Activated CD4-positive, alpha-beta memory T cell treated with anti-CD3 and anti-CD28 coated beads, Interleukin-2, amount 10 ng/mL, durations not matched to agents 7 days and 5 days (primary cell): ENCODE measurements at regions of chr3 and their contacts with region 1.

Region 1: DNA sequence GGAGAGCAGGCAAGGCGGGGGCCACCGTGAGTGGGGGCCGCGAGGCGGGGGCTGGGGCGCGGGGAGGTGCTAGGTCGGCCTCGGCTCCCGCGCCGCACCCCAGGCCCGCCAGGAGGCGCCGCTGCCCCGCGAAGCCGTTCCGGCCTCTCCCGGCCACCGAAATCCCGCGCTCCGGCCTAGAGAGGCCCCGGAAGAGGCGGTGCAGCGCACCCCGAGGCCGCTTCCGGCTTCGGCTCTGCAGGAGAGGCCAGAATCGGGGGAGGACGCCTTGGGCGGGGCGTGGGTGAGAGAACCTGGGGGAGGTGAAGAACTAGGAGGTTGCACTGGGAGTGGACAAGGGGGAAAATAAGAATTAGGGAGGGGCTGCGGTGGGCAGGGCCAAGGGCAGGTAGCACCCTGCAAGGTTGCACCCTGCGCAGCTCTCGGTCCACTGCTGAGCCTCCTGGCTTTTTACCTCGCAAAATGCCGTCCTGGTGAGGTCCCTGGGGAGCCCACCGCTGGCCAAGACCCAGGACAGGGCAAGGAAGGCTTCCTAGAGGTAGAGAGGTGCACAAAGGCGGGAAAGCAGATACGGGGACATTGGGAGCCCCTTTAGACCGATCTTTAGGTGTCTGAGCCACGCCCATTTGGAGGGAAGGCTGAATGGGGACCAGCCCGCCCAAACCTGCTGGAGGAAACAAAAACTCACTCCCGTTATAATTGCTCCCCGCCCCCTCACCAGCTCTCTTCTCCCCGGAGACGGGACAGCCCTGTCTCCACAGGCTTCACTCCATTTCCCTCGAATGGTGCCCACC is 8.4 kb upstream of the GNAI2 start:
- DNase-seq: peak; percentile 94
- H3K4me3 Mint-ChIP-seq: peak overlapping the region; percentile 85
- H3K27ac Mint-ChIP-seq: peak overlapping the region; percentile 89
- H3K4me1 Mint-ChIP-seq: peaks cover 32% of the 10 kb centered on the region
- H3K27me3 Mint-ChIP-seq: peaks cover 15% of the 10 kb centered on the region

Region 2: DNA sequence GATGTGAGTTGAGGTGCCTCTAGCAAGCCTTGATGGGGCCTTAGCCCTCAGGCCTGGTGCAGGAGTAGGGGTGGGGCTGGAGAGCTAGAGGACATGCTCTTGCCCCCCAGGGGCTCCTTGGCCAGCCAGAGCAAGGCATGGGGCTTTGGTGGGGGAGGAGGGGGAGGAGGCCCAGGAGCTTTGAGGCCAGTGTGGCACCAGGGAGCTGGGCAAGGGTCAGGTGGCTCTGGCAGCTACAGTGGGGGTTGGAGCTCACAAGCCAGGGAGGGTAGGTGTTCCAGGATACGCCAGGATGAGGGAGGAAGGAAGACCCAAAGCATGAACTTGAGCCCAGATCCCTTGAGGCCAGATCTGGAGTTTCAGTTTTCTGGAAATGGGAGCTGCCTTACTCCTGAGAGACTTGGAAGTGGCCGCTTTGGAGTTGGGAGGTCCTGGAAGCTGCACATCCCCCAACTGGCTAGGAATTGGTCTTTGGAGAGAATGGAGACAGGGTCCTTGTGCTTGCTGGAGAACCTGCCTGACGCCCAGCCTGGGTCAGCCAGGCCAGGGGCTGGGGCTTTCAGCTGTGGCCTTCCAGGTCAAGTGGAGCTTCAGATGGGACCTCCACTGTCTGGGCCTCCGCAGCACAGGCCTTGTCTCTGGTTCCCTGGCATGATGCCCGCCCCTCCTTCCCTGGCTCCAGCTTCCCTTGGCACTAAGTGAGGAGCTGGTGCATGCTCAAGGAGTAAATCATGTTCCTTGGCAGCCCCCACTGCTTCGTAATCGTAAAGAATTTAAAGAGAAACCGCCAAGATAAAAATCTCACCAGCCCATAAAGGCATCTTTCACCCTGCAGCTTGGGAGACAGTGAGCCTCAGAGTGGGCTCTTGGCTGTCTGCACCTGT is 63.8 kb before region 1 on chr3:
- CTCF ChIA-PET with region 1: no interaction called
- POLR2A ChIA-PET with region 1: no interaction called
- DNase-seq: no peak
- H3K4me3 Mint-ChIP-seq: no peak overlapping the region
- H3K27ac Mint-ChIP-seq: no peak overlapping the region
- H3K4me1 Mint-ChIP-seq: no peaks in the 10 kb centered on the region
- H3K27me3 Mint-ChIP-seq: peaks cover 1% of the 10 kb centered on the region

Region 3: DNA sequence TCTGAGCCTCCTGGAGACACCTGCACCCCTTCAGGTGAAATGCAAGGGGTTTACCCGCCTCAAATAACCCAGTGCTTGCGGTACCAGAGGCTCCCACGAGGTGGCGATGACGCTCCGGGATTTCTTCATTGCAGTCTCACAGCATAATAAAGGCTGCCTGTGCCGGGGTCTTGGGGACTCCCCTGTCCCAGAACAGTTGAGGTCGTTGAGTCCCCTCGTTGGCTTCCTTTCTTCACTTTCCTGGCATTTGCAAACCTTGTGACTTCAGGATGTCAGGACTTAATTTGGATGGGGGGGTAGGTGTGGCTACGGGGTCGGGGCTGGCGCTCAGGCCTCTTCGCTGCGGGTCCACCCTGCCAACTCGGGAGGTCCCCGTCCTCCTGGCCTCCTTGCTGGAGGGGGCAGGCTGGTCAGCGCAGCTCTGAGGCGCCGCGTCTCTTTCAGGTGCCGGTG is 34.9 kb before region 1 on chr3:
- CTCF ChIA-PET with region 1: interaction called, 101 read pairs
- POLR2A ChIA-PET with region 1: interaction called, 42 read pairs
- DNase-seq: peak; percentile 85
- H3K4me3 Mint-ChIP-seq: no peak overlapping the region
- H3K27ac Mint-ChIP-seq: no peak overlapping the region
- H3K4me1 Mint-ChIP-seq: peaks cover 12% of the 10 kb centered on the region
- H3K27me3 Mint-ChIP-seq: peaks cover 25% of the 10 kb centered on the region

Region 4: GRCh38 chr3:50201573-50202315 is 25.8 kb before region 1 on chr3:
- CTCF ChIA-PET with region 1: interaction called, 101 read pairs
- POLR2A ChIA-PET with region 1: no interaction called
- DNase-seq: no peak
- H3K4me3 Mint-ChIP-seq: no peak overlapping the region
- H3K27ac Mint-ChIP-seq: no peak overlapping the region
- H3K4me1 Mint-ChIP-seq: no peaks in the 10 kb centered on the region
- H3K27me3 Mint-ChIP-seq: peaks cover 41% of the 10 kb centered on the region

Region 5: DNA sequence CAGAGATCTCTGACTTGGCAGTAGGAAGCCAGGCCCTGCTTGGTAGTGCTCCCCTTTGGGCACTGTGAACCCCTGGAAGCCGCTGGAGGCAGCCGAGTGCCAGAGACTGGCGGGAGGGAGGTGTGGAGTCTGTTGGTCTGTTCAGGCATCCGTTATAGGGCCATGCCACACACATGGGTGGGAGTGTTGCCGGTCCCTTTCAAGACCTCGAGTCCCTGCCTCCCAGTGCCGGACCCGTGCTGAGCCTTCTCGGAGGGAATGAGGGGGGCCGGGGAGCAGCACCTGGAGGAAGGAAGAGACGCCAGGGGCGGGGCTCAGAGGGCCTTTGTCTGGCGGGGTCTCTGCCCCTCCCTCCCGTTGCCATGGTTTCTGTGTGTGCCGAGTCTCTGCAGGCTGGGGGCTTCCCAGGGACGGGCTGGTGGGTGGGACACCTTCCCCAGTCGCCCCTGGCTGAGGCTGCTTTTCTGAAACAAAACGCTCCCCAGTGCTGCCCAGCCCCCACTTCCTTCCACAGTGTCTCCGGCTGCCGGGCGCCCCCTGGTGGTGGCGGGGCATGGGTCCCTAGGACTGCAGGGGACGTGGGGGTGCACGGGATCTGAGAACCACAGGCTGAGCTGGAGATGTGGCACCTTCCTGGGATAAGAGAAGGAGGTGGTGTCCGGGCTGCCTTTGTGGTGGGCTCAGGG is 18.4 kb after region 1 on chr3:
- CTCF ChIA-PET with region 1: interaction called, 212 read pairs
- POLR2A ChIA-PET with region 1: interaction called, 117 read pairs
- DNase-seq: peak; percentile 94
- H3K4me3 Mint-ChIP-seq: peak overlapping the region; percentile 78
- H3K27ac Mint-ChIP-seq: peak overlapping the region; percentile 94
- H3K4me1 Mint-ChIP-seq: peaks cover 91% of the 10 kb centered on the region
- H3K27me3 Mint-ChIP-seq: no peaks in the 10 kb centered on the region

Region 6: DNA sequence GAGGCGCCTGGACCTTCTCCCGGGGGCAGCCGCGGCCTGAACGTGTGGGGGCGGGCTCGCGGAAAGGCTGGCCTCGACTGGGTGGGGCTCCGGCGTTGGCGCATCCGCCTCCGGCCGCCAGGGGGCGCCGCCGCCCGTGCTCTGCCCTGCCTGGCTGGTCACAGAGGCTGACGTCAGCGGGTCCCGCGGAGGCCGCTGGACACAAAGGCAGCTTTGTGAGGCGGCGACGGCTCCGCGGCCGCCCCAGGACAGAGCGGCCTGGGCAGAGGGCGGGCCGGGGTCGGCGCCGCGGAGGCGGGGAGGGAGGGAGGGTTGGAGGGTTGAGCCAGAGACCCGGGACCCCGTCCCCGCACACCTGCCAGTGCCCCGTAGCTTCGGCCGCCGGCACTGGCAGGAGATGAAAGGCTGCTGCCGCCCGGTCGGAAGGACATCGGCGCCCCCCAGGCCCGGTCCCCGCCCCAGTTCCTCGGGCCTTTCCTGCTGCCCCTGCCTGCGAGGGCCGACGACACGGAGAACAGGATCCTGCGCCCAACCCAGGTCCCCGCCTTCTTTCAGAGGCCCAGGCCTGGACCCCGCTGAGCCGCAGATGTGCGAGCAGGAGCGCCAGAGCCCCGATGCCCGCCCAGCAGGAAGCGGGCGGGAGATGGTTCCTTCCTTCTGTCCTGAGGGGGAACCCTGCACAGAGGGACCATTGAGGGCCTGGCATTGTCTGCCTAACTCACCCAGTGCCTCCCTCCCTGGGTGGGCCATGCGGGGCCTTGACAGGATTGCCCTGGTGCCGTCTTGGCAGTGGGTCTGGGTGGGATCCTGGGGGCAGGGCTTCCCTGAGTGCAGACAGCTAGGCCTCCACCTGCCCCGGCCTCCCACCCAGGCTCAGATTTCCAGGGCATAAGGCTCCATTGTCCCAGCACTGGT is 32.7 kb after region 1 on chr3:
- CTCF ChIA-PET with region 1: interaction called, 12 read pairs
- POLR2A ChIA-PET with region 1: interaction called, 12 read pairs
- DNase-seq: peak; percentile 87
- H3K4me3 Mint-ChIP-seq: peak overlapping the region; percentile 60
- H3K27ac Mint-ChIP-seq: no peak overlapping the region
- H3K4me1 Mint-ChIP-seq: peaks cover 12% of the 10 kb centered on the region
- H3K27me3 Mint-ChIP-seq: no peaks in the 10 kb centered on the region

Region 7: DNA sequence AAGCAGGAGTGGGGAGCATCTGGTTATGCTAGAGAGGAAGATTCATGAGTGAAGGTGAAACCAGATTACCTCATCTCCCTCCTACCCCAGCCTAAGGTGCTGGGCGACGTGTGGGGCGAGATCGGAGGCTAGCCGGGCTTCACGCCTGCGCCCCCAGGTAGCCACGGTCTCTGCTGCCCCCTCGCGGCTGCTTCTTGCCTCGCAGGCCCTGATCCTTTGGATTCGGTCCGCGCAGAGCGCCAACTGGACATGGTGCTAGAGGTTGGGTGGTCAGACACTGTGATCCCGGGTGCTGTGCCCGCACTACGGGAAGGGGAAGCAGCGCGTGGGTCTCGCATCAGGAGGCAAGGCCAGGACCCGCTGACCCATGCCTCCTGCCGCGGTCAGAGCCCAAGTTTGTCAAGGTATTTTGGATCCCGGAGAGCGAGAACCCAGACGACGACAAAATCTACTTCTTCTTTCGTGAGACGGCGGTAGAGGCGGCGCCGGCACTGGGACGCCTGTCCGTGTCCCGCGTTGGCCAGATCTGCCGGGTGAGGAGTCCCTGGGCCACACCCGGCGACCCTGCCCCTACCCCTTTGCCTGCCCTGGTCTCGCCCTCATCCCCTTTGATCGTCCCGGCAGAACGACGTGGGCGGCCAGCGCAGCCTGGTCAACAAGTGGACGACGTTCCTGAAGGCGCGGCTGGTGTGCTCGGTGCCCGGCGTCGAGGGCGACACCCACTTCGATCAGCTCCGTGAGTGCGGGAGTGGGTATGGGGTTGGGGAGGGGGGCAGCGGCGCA is 45.5 kb after region 1 on chr3:
- CTCF ChIA-PET with region 1: interaction called, 18 read pairs
- POLR2A ChIA-PET with region 1: no interaction called
- DNase-seq: peak; percentile 90
- H3K4me3 Mint-ChIP-seq: peak overlapping the region; percentile 62
- H3K27ac Mint-ChIP-seq: no peak overlapping the region
- H3K4me1 Mint-ChIP-seq: peaks cover 33% of the 10 kb centered on the region
- H3K27me3 Mint-ChIP-seq: peaks cover 49% of the 10 kb centered on the region

Region 8: DNA sequence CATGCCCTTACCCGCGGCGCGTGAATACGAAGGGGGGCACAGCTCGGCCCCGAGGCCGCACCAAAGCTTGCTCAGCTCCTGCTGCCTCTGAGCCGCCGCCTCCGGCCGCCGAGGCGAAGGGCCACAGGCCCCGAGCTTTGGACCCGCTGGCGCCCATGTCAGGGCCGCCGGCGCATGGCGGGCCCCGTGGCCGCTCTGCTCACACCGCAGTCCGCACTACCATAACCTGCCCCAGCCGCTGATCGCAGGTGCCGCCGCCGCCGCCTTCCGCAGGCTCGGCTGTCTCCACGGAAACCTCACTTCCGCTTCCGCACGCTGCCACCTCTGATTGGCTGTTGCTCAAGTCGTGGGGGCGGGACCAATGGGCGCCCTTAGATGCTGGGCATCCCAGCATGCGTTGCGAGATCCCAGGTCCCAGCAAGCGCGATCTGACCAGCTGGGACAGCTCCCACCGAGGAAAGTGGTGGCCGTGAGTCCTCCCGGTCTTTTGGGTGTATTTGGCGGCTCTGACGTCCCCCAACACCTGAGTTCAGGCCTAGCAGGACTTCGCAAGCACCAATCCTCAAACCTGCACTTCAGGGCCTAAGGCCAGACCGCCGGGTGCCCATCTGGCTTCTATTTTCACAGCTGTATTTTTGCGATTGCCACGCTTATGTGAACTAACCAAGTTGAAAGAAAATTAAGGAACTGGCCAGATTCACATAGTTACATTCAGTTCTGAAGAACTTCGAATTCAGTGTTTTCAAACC is 100.5 kb after region 1 on chr3 and contains the start of gene TUSC2:
- CTCF ChIA-PET with region 1: interaction called, 5 read pairs
- POLR2A ChIA-PET with region 1: interaction called, 10 read pairs
- DNase-seq: peak; percentile 97
- H3K4me3 Mint-ChIP-seq: peak within 1 kb of the TSS; percentile 93
- H3K27ac Mint-ChIP-seq: peak within 1 kb of the TSS; percentile 79
- H3K4me1 Mint-ChIP-seq: peaks cover 46% of the 10 kb centered on the region
- H3K27me3 Mint-ChIP-seq: no peaks in the 10 kb centered on the region
- total RNA-seq, gene TUSC2: 16.8 to 17.9 TPM

Region 9: GRCh38 chr3:50724831-50725230 is 497.2 kb after region 1 on chr3:
- CTCF ChIA-PET with region 1: no interaction called
- POLR2A ChIA-PET with region 1: no interaction called
- DNase-seq: no peak
- H3K4me3 Mint-ChIP-seq: no peak overlapping the region
- H3K27ac Mint-ChIP-seq: no peak overlapping the region
- H3K4me1 Mint-ChIP-seq: no peaks in the 10 kb centered on the region
- H3K27me3 Mint-ChIP-seq: peaks cover 2% of the 10 kb centered on the region